ENCODE measurements at regions of chr18 and their contacts with region 1.

Region 1: GRCh38 chr18:13221869-13222855 is 3.6 kb downstream of the LDLRAD4 start:
- DNase-seq: peak; percentile 77 to 79
- ATAC-seq: peak; percentile 44 to 79 (median 70)
- H3K4me3 ChIP-seq: peak overlapping the region in 9 of 10 donors; percentile 1 to 45 (median 19)
- H3K27ac ChIP-seq: peak overlapping the region; percentile 69 to 97 (median 92)
- H3K4me1 ChIP-seq: peaks cover 24 to 68% (median 60%) of the 10 kb centered on the region in 9 donors
- H3K27me3 ChIP-seq: peaks cover 0 to 17% (median 0%) of the 10 kb centered on the region in 7 donors
- CTCF ChIP-seq: peak in 1 of 9 donors; percentile 14

Region 2: GRCh38 chr18:12819322-12819721 is 402.8 kb before region 1 on chr18:
- intact Hi-C with region 1: no loop called
- DNase-seq: no peak
- ATAC-seq: no peak
- H3K4me3 ChIP-seq: no peak overlapping the region
- H3K27ac ChIP-seq: peak overlapping the region in 1 of 10 donors; percentile 49
- H3K4me1 ChIP-seq: peaks cover 0 to 9% (median 0%) of the 10 kb centered on the region in 9 donors
- H3K27me3 ChIP-seq: no peaks in the 10 kb centered on the region
- CTCF ChIP-seq: no peak

Region 3: GRCh38 chr18:13245481-13246000 is 23.4 kb after region 1 on chr18:
- intact Hi-C with region 1: no loop called
- DNase-seq: no peak
- ATAC-seq: no peak
- H3K4me3 ChIP-seq: no peak overlapping the region
- H3K27ac ChIP-seq: no peak overlapping the region
- H3K4me1 ChIP-seq: peaks cover 0 to 13% (median 0%) of the 10 kb centered on the region in 9 donors
- H3K27me3 ChIP-seq: no peaks in the 10 kb centered on the region
- CTCF ChIP-seq: no peak

Region 4: DNA sequence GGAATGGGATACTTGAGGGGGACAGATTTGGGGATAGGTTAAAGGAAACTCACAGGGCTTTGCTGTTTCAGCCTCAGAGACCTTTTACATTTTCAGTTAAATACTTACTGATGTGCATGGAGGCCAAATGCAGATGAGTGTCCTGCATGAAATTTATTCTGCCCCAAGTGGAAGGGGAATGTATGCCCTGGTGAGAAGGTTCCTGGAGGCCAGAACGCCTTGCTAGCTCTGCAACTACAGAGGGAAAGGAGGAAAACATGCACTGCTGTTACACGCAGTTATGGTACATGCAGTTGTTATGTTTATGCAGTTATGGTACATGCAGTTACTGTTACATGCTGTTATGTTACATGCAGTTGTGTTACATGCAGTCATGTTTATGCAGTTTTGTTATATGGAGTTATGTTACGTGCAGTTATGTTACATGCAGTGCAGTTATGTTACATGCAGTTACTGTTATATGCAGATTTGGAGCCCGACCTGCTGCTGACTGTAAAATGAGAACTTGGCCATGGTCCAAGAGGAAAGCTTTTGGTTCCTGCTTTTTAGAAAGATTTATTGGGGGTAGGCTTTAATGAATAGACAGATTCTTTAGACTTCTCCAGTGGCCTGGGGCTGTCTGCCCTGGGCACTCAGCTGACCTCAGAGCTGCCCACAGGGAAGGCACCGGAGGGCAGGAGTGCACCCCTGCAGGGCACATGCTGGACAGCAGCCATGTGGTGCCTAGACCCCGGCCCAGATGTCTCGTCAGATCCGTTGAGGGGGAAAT is 80.5 kb after region 1 on chr18:
- intact Hi-C with region 1: loop called in 3 of 10 experiments (anchors 5 to 10 kb)
- DNase-seq: peak in 1 of 2 donors; percentile 32
- ATAC-seq: peak in 3 of 8 donors; percentile 11 to 20 (median 20)
- H3K4me3 ChIP-seq: no peak overlapping the region
- H3K27ac ChIP-seq: peak overlapping the region in 3 of 10 donors; percentile 0 to 41 (median 8)
- H3K4me1 ChIP-seq: peaks cover 23 to 66% (median 43%) of the 10 kb centered on the region in 9 donors
- H3K27me3 ChIP-seq: no peaks in the 10 kb centered on the region
- CTCF ChIP-seq: no peak

Region 5: GRCh38 chr18:13369756-13370510 is 147.8 kb after region 1 on chr18:
- intact Hi-C with region 1: loop called in 6 of 10 experiments (anchors 5 to 10 kb)
- DNase-seq: no peak
- ATAC-seq: no peak
- H3K4me3 ChIP-seq: no peak overlapping the region
- H3K27ac ChIP-seq: no peak overlapping the region
- H3K4me1 ChIP-seq: peaks cover 0 to 33% (median 11%) of the 10 kb centered on the region in 9 donors
- H3K27me3 ChIP-seq: no peaks in the 10 kb centered on the region
- CTCF ChIP-seq: no peak

Region 6: GRCh38 chr18:13425462-13426133 is 203.4 kb after region 1 on chr18:
- intact Hi-C with region 1: loop called in 1 of 10 experiments (anchors 2 kb)
- DNase-seq: no peak
- ATAC-seq: no peak
- H3K4me3 ChIP-seq: no peak overlapping the region
- H3K27ac ChIP-seq: no peak overlapping the region
- H3K4me1 ChIP-seq: peaks cover 14 to 63% (median 28%) of the 10 kb centered on the region in 9 donors
- H3K27me3 ChIP-seq: no peaks in the 10 kb centered on the region
- CTCF ChIP-seq: no peak

Measured in heart right ventricle (tissue), 16 donors.